ENCODE measurements at regions of chr5 and their contacts with region 1.

Region 1: DNA sequence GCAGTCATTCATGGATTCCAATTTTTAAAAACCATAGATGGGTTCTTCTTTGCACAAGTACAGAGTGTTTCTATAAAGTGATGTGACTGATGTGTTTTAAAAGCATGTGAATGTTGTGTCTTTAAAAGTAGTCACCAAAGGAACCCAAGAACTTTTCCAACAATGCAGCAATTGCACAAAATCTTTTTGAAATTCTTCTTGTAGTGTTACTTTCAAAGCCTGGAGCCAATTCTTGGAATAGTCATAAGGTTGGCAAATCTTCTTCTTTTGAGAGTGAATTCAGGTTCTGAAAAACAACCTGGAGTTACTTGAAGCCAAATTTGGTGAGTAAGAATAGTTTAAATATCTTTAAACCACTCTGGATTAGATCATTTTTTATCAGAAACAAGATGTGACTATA is 10.5 kb downstream of the GRAMD2B start:
- DNase-seq: peak; percentile 68
- H3K4me3 ChIP-seq: no peak overlapping the region
- H3K27ac ChIP-seq: peak overlapping the region; percentile 59
- H3K4me1 ChIP-seq: peaks cover 15% of the 10 kb centered on the region
- H3K27me3 ChIP-seq: no peaks in the 10 kb centered on the region
- CTCF ChIP-seq: no peak

Region 2: DNA sequence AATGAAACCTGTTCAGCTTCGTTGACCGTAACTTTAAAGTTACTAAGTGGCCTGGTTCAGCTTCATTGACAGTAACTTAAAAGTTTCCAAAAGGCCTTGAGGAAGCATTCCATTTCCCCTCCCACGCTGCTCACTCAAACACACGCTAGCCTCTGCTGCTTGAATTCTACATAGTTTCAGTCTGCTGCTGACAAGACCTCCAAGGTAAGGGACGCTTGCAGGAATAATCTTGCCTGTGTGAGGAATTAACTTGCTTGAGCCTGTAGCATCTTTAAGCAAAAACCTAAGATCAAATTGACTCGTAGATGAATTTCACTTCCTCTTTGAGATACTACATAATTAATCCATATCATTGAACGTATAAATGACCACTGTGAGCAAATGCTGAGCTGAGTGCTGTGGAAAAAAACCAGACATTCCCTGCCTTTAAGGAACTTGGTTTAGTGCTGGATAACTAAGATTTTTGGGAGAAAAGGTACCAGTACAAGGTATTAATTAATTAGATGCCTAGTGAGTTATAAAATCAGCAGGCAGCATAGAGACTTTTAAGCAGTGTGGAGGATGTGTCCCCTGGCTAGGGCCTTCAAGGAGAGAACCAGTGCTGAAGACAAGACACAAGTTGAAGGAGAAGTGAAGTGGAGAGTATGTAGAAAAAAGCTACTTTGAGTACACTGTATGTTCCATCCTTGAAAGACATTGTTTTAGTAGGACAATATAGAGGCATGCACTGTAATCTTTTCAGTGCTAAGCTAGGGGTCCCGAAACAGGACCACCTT is 28.7 kb after region 1 on chr5:
- CTCF ChIA-PET with region 1: no interaction called
- dilution Hi-C with region 1: no loop called
- in situ Hi-C with region 1: no loop called
- intact Hi-C with region 1: loop called (anchors 2 kb)
- DNase-seq: peak; percentile 51
- H3K4me3 ChIP-seq: no peak overlapping the region
- H3K27ac ChIP-seq: peak overlapping the region; percentile 72
- H3K4me1 ChIP-seq: peaks cover 23% of the 10 kb centered on the region
- H3K27me3 ChIP-seq: no peaks in the 10 kb centered on the region
- CTCF ChIP-seq: no peak

Region 3: DNA sequence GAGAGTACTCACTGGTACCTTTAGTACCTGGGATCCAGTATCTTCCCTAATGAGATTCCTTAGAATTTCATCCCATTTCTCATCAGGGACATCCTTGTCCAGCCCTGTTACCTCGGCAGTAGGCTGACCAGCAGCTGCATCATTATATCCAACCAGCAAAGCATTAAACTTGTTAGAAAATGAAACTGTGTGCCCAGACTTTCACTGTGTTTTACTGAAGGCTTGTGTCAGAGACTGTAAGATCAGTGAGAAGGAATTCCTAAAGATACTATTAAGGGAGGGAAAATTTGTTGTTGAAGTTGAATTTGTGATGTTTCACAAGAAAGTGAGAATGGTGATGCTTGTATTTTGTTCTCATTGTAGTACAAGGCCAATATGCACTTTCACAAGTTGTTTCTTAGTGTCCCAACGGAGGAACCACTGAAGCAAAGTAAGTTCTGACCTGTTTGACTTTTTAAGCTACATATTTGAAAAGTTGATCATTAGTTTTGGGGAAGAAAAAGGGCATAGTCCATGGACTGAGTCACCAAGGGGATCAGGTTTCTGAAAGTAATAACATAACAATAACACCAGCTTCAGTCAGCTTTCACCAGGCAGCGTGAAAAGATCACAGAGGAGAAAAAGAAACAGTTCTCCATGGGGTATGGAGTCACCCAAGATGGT is 38.3 kb after region 1 on chr5:
- CTCF ChIA-PET with region 1: no interaction called
- dilution Hi-C with region 1: loop called (anchors 5 kb)
- in situ Hi-C with region 1: no loop called
- intact Hi-C with region 1: no loop called
- DNase-seq: peak; percentile 86
- H3K4me3 ChIP-seq: no peak overlapping the region
- H3K27ac ChIP-seq: peak overlapping the region; percentile 80
- H3K4me1 ChIP-seq: peaks cover 32% of the 10 kb centered on the region
- H3K27me3 ChIP-seq: no peaks in the 10 kb centered on the region
- CTCF ChIP-seq: no peak

Region 4: GRCh38 chr5:126531543-126532120 is 97.9 kb after region 1 on chr5:
- CTCF ChIA-PET with region 1: no interaction called
- dilution Hi-C with region 1: loop called (anchors 5 kb)
- in situ Hi-C with region 1: no loop called
- intact Hi-C with region 1: no loop called
- DNase-seq: peak; percentile 32
- H3K4me3 ChIP-seq: no peak overlapping the region
- H3K27ac ChIP-seq: no peak overlapping the region
- H3K4me1 ChIP-seq: peaks cover 18% of the 10 kb centered on the region
- H3K27me3 ChIP-seq: no peaks in the 10 kb centered on the region
- CTCF ChIP-seq: no peak

Region 5: DNA sequence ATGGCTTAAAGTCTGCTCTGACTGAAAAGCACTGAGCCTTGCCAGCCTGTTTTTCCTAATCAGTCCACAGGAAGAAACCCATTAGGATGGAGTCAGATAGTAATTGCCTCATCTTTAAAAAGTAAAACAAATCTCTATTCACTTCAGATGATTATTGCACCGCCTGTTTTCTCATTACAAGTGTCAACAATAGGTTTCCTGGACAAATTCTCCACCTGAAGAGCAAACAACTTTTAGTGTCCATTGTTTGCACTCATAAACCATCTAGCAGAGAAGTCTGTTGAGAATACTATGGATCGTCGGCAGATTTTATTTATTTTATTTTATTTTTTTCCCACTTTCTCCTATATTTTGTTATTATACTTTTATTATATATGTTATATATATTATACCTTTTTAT is 619.3 kb after region 1 on chr5:
- CTCF ChIA-PET with region 1: no interaction called
- dilution Hi-C with region 1: no loop called
- in situ Hi-C with region 1: no loop called
- intact Hi-C with region 1: no loop called
- DNase-seq: no peak
- H3K4me3 ChIP-seq: no peak overlapping the region
- H3K27ac ChIP-seq: no peak overlapping the region
- H3K4me1 ChIP-seq: no peaks in the 10 kb centered on the region
- H3K27me3 ChIP-seq: no peaks in the 10 kb centered on the region
- CTCF ChIP-seq: no peak